Activated CD8-positive, alpha-beta memory T cell treated with anti-CD3 and anti-CD28 coated beads, Interleukin-2, amount 10 ng/mL, durations not matched to agents 7 days and 5 days (primary cell): ENCODE measurements at regions of chr12 and their contacts with region 1.

Region 1: DNA sequence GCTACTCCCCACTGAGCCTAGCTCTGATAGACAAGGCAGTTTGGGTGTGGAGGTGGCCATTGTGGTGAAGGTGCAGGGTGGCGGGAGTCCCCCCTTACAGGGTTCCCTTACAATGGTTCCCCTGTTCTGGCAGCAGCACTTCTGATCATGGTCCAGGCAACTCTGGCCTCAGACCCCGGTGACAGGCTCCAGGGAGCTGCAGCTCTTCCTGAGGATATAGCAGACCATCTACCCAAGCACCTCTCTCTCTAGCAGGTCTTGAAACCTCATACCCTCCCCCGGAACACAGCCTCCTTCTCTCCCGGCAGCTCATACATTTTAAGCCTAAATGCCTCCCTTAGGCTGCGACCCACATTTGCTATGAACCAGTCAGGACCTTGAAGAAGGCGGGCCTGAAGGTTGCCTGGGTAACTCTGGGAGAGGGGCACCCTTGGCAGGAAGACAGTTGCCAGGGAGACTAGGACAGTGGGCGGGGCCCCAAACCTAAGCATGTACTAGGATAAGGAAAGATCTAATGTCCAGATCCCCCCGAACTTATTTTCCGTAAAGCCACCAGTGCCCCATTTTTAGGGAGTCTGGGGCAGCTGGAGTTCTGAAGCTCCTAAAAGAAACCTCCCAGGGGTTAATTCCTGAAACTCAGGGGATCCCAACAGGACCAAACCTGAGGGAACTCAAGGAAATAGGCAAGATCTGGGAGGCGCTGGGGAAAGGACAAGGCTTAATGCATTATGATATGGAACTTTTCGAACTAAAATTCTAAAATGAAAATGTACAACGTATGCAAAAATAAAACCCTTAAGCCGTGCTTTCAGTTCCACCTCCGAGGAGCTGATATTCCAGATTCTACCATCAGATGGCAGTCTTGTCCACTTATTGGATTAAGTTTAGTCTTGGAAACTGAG is 4.5 kb upstream of the GDF11 start:
- DNase-seq: peak; percentile 93
- ATAC-seq: peak; percentile 75
- H3K4me3 Mint-ChIP-seq: peak overlapping the region; percentile 80
- H3K27ac Mint-ChIP-seq: peak overlapping the region; percentile 88
- H3K4me1 Mint-ChIP-seq: peaks cover 31% of the 10 kb centered on the region
- H3K27me3 Mint-ChIP-seq: peaks cover 8% of the 10 kb centered on the region

Region 2: DNA sequence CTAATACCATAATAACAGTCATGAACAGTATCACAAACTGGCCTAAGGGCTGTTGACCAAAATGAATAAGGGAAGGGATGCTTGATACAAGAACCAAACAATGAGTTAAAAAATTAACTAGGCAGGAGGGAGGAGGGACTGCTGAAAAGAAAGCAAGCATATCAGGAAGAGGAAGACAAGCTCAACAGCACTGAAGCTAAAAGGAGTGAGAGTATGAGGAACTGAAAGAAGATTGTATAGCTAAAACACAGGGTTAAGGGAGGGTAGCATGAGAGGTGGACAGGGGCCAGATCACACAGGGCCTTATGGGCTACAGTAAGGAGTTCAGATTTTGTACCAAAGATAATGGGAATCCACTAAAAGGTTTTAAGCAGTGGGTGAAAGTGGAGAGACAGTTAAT is 64.7 kb before region 1 on chr12:
- CTCF ChIA-PET with region 1: no interaction called
- DNase-seq: no peak
- ATAC-seq: no peak
- H3K4me3 Mint-ChIP-seq: no peak overlapping the region
- H3K27ac Mint-ChIP-seq: no peak overlapping the region
- H3K4me1 Mint-ChIP-seq: no peaks in the 10 kb centered on the region
- H3K27me3 Mint-ChIP-seq: peaks cover 18% of the 10 kb centered on the region

Region 3: DNA sequence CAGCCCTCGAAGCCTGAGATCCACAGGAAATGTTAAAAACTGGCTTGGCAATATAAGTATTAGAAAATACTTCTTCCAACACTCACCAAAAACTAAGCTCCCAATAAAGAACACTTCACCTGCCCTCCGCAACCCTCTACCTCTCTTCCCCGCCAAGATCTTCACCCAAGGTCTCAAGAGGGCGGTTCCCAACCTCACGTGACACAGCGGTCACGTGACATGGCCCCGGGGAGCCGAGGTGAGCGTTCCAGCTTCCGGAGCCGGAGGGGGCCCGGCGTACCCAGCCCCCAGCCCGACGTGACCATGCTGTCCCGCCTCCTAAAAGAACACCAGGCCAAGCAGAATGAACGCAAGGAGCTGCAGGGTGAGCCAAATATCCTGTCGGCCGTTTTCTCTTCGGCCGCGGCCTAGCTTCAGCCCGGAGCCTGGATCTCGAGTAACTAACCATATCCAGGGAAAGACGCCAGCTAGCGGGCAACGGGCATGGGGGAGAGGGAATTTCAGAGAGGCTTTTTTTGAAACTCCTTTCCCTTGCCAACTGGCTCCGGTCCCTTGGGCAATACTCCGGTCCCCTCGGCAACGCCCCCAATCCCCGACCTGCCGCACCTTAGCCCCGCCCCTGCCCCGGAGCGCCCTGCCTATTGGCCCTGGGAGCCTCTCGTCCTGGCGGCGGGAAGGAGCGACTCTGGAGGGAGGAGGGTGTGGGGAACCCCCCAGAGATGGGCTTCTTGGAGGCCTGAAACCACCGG is 22.4 kb before region 1 on chr12 and contains the start of gene BLOC1S1:
- CTCF ChIA-PET with region 1: interaction called, 233 read pairs
- DNase-seq: peak; percentile 96
- ATAC-seq: peak; percentile 95
- H3K4me3 Mint-ChIP-seq: peak within 1 kb of the TSS; percentile 90
- H3K27ac Mint-ChIP-seq: peak within 1 kb of the TSS; percentile 90
- H3K4me1 Mint-ChIP-seq: peaks cover 49% of the 10 kb centered on the region
- H3K27me3 Mint-ChIP-seq: peaks cover 7% of the 10 kb centered on the region
- total RNA-seq, gene BLOC1S1: 151 to 152 TPM

Region 4: GRCh38 chr12:55817346-55818139 is 79.2 kb after region 1 on chr12 and contains the starts of genes ORMDL2 and SARNP:
- CTCF ChIA-PET with region 1: interaction called, 40 read pairs
- DNase-seq: peak; percentile 100
- ATAC-seq: peak; percentile 96
- H3K4me3 Mint-ChIP-seq: no peak within 1 kb of the TSS
- H3K27ac Mint-ChIP-seq: no peak within 1 kb of the TSS
- H3K4me1 Mint-ChIP-seq: peaks cover 41% of the 10 kb centered on the region
- H3K27me3 Mint-ChIP-seq: no peaks in the 10 kb centered on the region
- total RNA-seq, gene ORMDL2: 45.8 to 57.2 TPM
- total RNA-seq, gene SARNP: 96.8 to 98.6 TPM

Region 5: GRCh38 chr12:55842681-55843429 is 104.5 kb after region 1 on chr12 and contains the start of gene MMP19:
- CTCF ChIA-PET with region 1: no interaction called
- DNase-seq: no peak
- ATAC-seq: no peak
- H3K4me3 Mint-ChIP-seq: no peak within 1 kb of the TSS
- H3K27ac Mint-ChIP-seq: no peak within 1 kb of the TSS
- H3K4me1 Mint-ChIP-seq: peaks cover 10% of the 10 kb centered on the region
- H3K27me3 Mint-ChIP-seq: no peaks in the 10 kb centered on the region
- total RNA-seq, gene MMP19: not detected

Region 6: DNA sequence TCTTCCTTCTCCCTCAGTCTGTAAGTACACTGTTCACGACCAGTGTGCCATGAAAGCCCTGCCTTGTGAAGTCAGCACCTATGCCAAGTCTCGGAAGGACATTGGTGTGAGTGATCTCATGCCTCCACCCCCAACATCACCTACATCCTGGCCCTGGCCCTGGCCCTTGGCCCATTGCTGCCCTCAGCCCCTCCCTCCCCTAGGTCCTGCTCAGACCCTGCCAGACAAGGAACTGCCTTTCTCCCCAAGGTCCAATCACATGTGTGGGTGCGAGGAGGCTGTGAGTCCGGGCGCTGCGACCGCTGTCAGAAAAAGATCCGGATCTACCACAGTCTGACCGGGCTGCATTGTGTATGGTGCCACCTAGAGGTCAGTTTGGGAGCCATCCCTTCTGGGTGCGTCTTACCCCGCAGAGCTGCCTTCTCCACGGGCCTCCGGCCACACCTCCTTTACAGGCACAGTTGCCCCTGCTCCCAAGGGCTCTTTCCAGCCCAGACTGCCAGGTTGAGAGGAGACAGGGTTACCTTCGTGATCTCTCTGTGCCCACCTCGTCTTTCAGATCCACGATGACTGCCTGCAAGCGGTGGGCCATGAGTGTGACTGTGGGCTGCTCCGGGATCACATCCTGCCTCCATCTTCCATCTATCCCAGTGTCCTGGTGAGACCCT is 201.8 kb after region 1 on chr12:
- CTCF ChIA-PET with region 1: interaction called, 66 read pairs
- DNase-seq: peak; percentile 91
- ATAC-seq: peak; percentile 95
- H3K4me3 Mint-ChIP-seq: no peak overlapping the region
- H3K27ac Mint-ChIP-seq: peak overlapping the region; percentile 58
- H3K4me1 Mint-ChIP-seq: peaks cover 63% of the 10 kb centered on the region
- H3K27me3 Mint-ChIP-seq: no peaks in the 10 kb centered on the region

Region 7: GRCh38 chr12:56029666-56030293 is 291.4 kb after region 1 on chr12:
- CTCF ChIA-PET with region 1: interaction called, 14 read pairs
- DNase-seq: peak; percentile 63
- ATAC-seq: peak; percentile 75
- H3K4me3 Mint-ChIP-seq: no peak overlapping the region
- H3K27ac Mint-ChIP-seq: no peak overlapping the region
- H3K4me1 Mint-ChIP-seq: peaks cover 44% of the 10 kb centered on the region
- H3K27me3 Mint-ChIP-seq: no peaks in the 10 kb centered on the region